ENCODE measurements at regions of chr1 and their contacts with region 1.

Region 1: DNA sequence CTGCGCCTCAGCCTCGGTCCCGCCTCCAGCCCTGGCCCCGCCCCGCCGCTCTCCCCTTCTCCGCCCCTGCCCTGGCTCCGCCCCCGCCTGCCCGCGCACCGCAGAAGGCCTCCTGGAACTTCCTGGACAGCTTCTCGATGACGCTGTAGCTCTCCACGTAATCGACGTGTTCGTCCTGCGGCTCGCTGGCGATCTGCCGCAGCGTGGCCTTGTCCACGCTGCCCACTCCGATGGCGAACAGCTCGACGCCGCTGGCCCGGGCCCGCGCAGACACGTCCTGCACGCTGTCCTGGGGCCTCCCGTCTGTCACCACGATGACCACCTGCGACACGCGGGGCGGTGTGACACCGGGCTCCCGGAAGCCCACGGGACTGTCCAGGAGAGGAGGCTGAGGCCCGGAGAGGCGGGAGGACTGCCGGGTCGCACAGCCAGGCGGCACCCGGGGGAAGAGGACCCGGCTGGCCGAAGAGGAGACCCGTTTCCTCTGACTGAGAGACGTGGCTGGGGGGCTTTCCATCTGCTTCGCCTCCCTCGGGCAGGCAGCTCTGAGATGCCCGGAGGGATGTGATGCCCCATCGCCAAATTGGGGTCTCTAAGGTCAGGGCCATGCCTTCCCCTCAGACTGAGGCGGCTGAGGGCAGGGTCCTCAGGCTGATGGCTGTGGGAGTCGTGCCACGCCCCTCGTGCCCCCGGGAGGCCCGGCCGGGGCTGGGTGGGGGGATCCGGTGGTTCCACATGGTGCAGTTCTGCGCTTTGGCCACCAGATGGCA is 4.6 kb downstream of the MATN1 start:
- DNase-seq: peak; percentile 75 to 97 (median 96)
- ATAC-seq: peak; percentile 78
- H3K4me3 ChIP-seq: peak overlapping the region; percentile 88
- H3K4me3 Mint-ChIP-seq: peak overlapping the region; percentile 83 to 96 (median 91)
- H3K27ac ChIP-seq: peak overlapping the region; percentile 100
- H3K27ac Mint-ChIP-seq: peak overlapping the region; percentile 86 to 97 (median 94)
- H3K4me1 ChIP-seq: peaks cover 10 to 37% of the 10 kb centered on the region in 2 donors
- H3K4me1 Mint-ChIP-seq: peaks cover 18 to 49% (median 38%) of the 10 kb centered on the region in 7 donors
- H3K27me3 ChIP-seq: no peaks in the 10 kb centered on the region
- H3K27me3 Mint-ChIP-seq: no peaks in the 10 kb centered on the region

Region 2: GRCh38 chr1:30732277-30732996 is 13.6 kb after region 1 on chr1:
- CTCF ChIA-PET with region 1: interaction called, 17 read pairs
- POLR2A ChIA-PET with region 1: interaction called, 30 read pairs
- intact Hi-C with region 1: no loop called
- DNase-seq: peak in 2 of 9 donors; percentile 26 to 48
- ATAC-seq: peak; percentile 71
- H3K4me3 ChIP-seq: no peak overlapping the region
- H3K4me3 Mint-ChIP-seq: peak overlapping the region in 1 of 10 donors; percentile 34
- H3K27ac ChIP-seq: peak overlapping the region; percentile 48
- H3K27ac Mint-ChIP-seq: peak overlapping the region; percentile 60 to 89 (median 83)
- H3K4me1 ChIP-seq: peaks cover 4 to 10% of the 10 kb centered on the region in 2 donors
- H3K4me1 Mint-ChIP-seq: peaks cover 19 to 30% (median 23%) of the 10 kb centered on the region in 7 donors
- H3K27me3 ChIP-seq: no peaks in the 10 kb centered on the region
- H3K27me3 Mint-ChIP-seq: no peaks in the 10 kb centered on the region

Region 3: DNA sequence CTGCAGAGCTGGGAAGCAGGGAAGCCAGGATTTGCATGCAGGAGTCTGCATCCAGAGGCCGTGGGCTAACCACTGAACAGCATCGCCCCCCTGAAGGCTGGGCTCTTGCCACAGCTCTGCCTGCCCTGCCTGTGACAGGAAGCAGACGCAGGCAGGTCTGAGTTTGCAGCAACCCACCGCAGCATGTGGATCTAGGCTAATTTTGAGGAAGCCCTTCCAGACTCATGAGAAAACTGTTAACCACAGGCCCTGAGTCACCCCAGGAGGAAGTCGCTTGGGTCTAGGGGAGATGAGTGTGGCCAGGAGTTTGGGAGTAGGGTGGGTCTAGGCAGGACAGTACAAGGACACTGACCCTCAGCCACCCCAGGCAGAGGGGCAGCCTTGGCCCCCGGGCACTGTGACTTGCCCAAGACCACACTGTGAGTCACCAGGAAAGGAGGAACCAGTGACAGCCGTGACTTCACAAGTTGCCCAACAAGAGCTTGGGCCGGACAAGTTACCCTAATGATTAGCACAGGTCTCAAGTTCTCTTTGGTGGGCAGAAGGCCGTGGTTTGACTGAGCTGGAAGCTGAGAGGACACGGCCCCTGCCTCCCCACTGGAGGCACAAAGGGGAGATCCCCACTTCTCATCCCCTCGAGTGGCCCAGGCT is 37.8 kb after region 1 on chr1:
- CTCF ChIA-PET with region 1: interaction called, 53 read pairs
- POLR2A ChIA-PET with region 1: interaction called, 1,281 read pairs
- intact Hi-C with region 1: loop called (anchors 1 kb)
- DNase-seq: peak; percentile 45 to 77 (median 65)
- ATAC-seq: peak; percentile 77
- H3K4me3 ChIP-seq: peak overlapping the region; percentile 80
- H3K4me3 Mint-ChIP-seq: peak overlapping the region; percentile 95 to 100 (median 98)
- H3K27ac ChIP-seq: peak overlapping the region; percentile 98
- H3K27ac Mint-ChIP-seq: peak overlapping the region; percentile 90 to 100 (median 97)
- H3K4me1 ChIP-seq: peaks cover 58 to 67% of the 10 kb centered on the region in 2 donors
- H3K4me1 Mint-ChIP-seq: peaks cover 68 to 90% (median 82%) of the 10 kb centered on the region in 7 donors
- H3K27me3 ChIP-seq: no peaks in the 10 kb centered on the region
- H3K27me3 Mint-ChIP-seq: no peaks in the 10 kb centered on the region

Region 4: DNA sequence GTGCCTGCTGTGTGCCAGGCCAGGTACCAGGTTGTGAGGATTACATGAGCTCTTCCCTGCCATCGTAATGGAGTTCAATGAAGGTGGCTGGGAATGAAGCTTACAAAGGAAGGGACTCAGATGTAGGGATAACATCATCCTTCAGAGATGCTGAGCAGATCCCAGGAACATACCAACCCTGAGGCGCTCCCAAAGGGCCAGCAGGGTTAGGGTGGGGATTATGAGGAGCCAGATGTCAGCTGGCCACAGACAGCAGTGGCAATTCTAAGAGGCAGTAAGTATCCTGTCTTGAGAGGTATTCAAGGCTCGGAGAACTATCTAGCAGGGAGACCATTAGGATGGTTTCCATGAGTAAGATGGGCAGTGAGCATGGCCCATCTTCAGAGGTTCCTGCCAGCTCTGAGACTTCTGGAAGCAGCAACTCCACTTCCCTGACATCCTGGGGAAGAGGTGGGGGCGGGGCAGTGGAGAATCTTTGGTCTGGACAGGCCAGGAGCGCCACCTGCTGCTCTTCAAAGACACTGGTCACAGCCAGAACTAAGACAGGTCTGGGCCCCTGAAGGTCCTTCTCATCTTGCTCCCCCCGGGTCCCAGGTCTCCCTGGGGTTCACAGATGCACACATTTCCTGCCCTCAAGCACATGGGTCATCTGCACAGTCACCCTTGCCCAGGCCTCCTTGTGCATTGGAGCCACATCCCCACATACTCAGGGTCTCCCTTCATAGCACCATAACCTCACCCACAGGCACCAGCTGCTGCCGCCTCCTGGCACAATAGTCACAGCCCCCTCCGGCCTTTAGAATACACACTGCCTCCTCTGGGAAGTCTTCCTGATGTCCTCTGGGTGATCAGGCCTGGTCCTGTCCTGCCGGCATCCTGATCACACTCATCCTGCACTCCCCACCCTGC is 192.5 kb after region 1 on chr1:
- CTCF ChIA-PET with region 1: no interaction called
- POLR2A ChIA-PET with region 1: interaction called, 4 read pairs
- intact Hi-C with region 1: loop called (anchors 1 kb)
- DNase-seq: peak in 2 of 9 donors; percentile 12 to 54
- ATAC-seq: peak; percentile 60
- H3K4me3 ChIP-seq: no peak overlapping the region
- H3K4me3 Mint-ChIP-seq: no peak overlapping the region
- H3K27ac ChIP-seq: no peak overlapping the region
- H3K27ac Mint-ChIP-seq: peak overlapping the region in 1 of 9 donors; percentile 66
- H3K4me1 ChIP-seq: peaks cover 0 to 6% of the 10 kb centered on the region in 2 donors
- H3K4me1 Mint-ChIP-seq: peaks cover 9 to 18% (median 15%) of the 10 kb centered on the region in 7 donors
- H3K27me3 ChIP-seq: peaks cover 0 to 4% of the 10 kb centered on the region in 2 donors
- H3K27me3 Mint-ChIP-seq: peaks cover 17 to 38% (median 19%) of the 10 kb centered on the region in 5 donors

Region 5: DNA sequence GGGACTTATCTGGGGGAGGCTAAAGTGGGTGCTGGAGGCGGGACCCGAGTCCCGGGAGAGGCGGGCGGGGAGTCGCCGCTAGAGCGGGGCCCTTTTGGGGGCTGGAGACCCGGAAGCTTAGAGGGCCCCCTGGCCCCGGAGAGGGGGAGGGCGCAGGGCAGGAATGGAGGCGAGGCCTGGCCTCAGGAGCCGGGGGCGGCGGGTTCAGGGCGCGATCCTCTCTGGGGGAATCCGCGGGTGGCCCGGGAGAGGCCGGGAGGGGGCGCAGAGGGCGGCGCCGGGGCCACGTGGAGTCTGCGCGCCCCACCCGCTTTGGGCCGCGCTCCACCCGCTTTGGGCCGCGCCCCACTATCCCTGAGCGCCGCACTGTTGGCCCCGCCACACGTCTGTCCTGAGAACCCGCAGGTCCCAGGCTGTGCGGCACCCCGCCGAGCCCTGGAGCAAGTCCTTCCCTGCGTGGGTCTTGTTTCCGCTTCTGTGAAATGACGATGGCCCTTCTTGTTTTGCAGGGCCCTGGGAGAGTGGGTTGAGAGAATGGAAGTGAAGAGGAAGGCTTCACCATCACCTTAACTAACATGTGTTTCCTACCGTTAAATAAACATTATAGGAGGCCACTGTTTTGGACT is 436.5 kb after region 1 on chr1:
- CTCF ChIA-PET with region 1: no interaction called
- POLR2A ChIA-PET with region 1: no interaction called
- intact Hi-C with region 1: loop called in 1 of 2 experiments (anchors 2 kb)
- DNase-seq: peak; percentile 20 to 82 (median 37)
- ATAC-seq: peak; percentile 81
- H3K4me3 ChIP-seq: peak overlapping the region; percentile 70
- H3K4me3 Mint-ChIP-seq: peak overlapping the region; percentile 84 to 94 (median 90)
- H3K27ac ChIP-seq: peak overlapping the region; percentile 65
- H3K27ac Mint-ChIP-seq: peak overlapping the region; percentile 41 to 86 (median 77)
- H3K4me1 ChIP-seq: peaks cover 5 to 11% of the 10 kb centered on the region in 2 donors
- H3K4me1 Mint-ChIP-seq: peaks cover 4 to 11% (median 10%) of the 10 kb centered on the region in 7 donors
- H3K27me3 ChIP-seq: no peaks in the 10 kb centered on the region
- H3K27me3 Mint-ChIP-seq: no peaks in the 10 kb centered on the region

Region 6: GRCh38 chr1:32072622-32073298 is 1353.9 kb after region 1 on chr1 and contains the start of gene TMEM39B:
- CTCF ChIA-PET with region 1: no interaction called
- POLR2A ChIA-PET with region 1: no interaction called
- intact Hi-C with region 1: loop called in 1 of 2 experiments (anchors 5 kb)
- DNase-seq: peak; percentile 90 to 97 (median 96)
- ATAC-seq: peak; percentile 92
- H3K4me3 ChIP-seq: peak within 1 kb of the TSS; percentile 98
- H3K4me3 Mint-ChIP-seq: peak within 1 kb of the TSS; percentile 83 to 94 (median 91)
- H3K27ac ChIP-seq: peak within 1 kb of the TSS; percentile 82
- H3K27ac Mint-ChIP-seq: peak within 1 kb of the TSS; percentile 84 to 95 (median 92)
- H3K4me1 ChIP-seq: peaks cover 5 to 16% of the 10 kb centered on the region in 2 donors
- H3K4me1 Mint-ChIP-seq: peaks cover 21 to 58% (median 47%) of the 10 kb centered on the region in 7 donors
- H3K27me3 ChIP-seq: no peaks in the 10 kb centered on the region
- H3K27me3 Mint-ChIP-seq: no peaks in the 10 kb centered on the region
- total RNA-seq, gene TMEM39B: 11.4 to 35.9 (median 26.4) TPM